T-cell (primary cell): ENCODE measurements at regions of chr13 and their contacts with region 1.

Region 1: DNA sequence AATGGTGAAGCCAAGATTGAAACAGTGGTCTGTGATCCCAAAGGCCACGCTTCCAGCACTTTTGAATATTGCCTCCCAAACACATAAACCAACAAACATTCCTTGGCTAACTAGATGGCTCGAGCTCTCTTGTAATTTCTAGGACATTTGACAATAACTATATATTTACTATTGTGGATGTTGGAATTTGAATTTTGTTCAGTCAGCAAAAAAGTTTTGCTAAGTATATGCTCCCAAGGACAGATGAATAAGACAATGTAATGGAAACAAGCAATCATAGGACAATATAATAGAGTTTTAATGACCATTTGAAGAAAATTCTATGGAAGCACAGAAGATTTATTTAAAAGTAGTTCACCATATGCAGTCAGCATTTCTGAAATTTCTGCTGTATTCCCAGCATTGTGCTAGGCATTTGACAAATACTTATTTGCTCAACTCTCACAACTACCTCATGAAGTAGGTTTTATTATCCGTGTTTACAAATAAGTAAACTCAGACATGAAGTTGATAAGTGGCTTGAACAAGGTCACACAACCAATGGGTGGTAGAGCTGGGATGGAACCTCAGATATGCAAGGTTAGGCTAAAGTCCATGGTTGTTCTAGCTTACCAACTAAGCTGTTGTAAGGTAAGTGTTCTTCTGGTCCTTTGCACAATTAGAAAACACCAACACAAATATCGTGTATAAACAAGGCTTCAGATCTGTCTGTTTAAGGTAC is 205.1 kb downstream of the NUFIP1 start:
- DNase-seq: no peak
- ATAC-seq: no peak
- H3K4me3 ChIP-seq: no peak overlapping the region
- H3K4me3 Mint-ChIP-seq: no peak overlapping the region
- H3K27ac ChIP-seq: no peak overlapping the region
- H3K27ac Mint-ChIP-seq: no peak overlapping the region
- H3K4me1 ChIP-seq: no peaks in the 10 kb centered on the region
- H3K4me1 Mint-ChIP-seq: no peaks in the 10 kb centered on the region
- H3K27me3 ChIP-seq: peaks cover 0 to 6% of the 10 kb centered on the region in 2 experiments
- H3K27me3 Mint-ChIP-seq: peaks cover 2 to 4% of the 10 kb centered on the region in 2 donors

Region 2: DNA sequence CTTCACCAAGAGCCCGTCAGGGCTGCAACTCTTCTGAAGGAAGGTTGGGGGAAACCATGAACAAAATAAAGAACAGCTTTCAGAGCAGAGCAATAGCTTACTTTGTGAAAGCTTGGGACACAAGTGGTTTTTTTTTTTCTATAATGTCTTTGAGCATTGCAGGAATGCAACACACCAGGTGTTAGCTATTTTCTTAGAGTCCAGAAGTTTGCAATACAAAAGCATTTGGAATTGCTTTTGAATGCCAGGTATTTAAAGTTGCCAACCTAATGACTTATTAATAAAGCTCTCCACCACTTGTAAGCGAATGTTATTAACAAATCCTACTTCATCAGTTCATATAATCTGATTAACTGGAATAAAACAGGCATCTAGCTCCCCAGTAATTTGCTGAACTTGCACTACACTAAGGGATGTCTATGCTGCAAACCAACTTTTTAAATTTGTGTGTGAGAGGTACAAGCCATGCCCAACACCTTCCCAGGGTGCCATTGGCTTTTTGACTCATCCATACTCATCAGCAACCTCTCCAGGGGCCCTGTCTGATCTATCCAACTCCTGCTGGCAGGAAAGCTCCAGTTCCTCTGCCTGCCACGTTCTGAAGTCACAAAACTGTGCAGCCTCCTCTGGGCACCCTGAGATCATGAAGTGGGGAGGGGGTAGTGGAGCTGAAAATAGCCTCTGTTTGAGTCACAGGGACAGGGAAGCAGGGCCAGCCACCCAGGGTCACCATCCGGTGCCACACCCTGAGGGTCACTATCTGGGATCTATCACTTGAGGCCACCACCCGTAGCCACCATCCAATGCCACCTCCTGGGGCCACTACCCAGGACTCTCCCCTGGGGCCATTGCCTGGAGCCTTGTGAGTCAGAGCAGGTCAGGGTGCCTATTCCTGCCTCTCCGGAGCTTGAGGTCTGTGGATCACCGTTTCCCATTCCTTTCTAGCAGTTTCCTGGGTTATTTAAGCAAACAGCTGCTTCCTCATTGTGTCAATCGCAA is 32.8 kb after region 1 on chr13:
- CTCF ChIA-PET with region 1: no interaction called
- POLR2A ChIA-PET with region 1: interaction called in 1 of 2 experiments, 11 read pairs
- DNase-seq: no peak
- ATAC-seq: no peak
- H3K4me3 ChIP-seq: no peak overlapping the region
- H3K4me3 Mint-ChIP-seq: no peak overlapping the region
- H3K27ac ChIP-seq: no peak overlapping the region
- H3K27ac Mint-ChIP-seq: no peak overlapping the region
- H3K4me1 ChIP-seq: no peaks in the 10 kb centered on the region
- H3K4me1 Mint-ChIP-seq: no peaks in the 10 kb centered on the region
- H3K27me3 ChIP-seq: peaks cover 0 to 8% of the 10 kb centered on the region in 2 experiments
- H3K27me3 Mint-ChIP-seq: peaks cover 3 to 10% of the 10 kb centered on the region in 2 donors